ENCODE measurements at regions of chr18 and their contacts with region 1.

Region 1: GRCh38 chr18:36296650-36297416 is 680 bp upstream of the FHOD3 start:
- DNase-seq: peak; percentile 77
- ATAC-seq: peak; percentile 67
- H3K4me3 ChIP-seq: peak overlapping the region; percentile 98
- H3K27ac ChIP-seq: peak overlapping the region; percentile 63
- H3K4me1 ChIP-seq: peaks cover 4% of the 10 kb centered on the region
- H3K27me3 ChIP-seq: no peaks in the 10 kb centered on the region; the same call in 1 of the 2 replicates
- CTCF ChIP-seq: peak; percentile 71
- POLR2A ChIP-seq: peak; percentile 54; the same call in 1 of the 2 replicates
- RAD21 ChIP-seq: peak; percentile 73

Region 2: GRCh38 chr18:36411745-36412168 is 114.9 kb after region 1 on chr18:
- CTCF ChIA-PET with region 1: no interaction called
- POLR2A ChIA-PET with region 1: no interaction called
- dilution Hi-C with region 1: no loop called
- in situ Hi-C with region 1: no loop called
- intact Hi-C with region 1: loop called (anchors 2 kb)
- DNase-seq: peak; percentile 19
- ATAC-seq: 0 out of 2 replicates have a peak, but pooled peaks have one; percentile 42
- H3K4me3 ChIP-seq: no peak overlapping the region
- H3K27ac ChIP-seq: no peak overlapping the region
- H3K4me1 ChIP-seq: no peaks in the 10 kb centered on the region
- H3K27me3 ChIP-seq: no peaks in the 10 kb centered on the region
- CTCF ChIP-seq: peak; percentile 46
- POLR2A ChIP-seq: no peak
- RAD21 ChIP-seq: peak; percentile 46

Region 3: DNA sequence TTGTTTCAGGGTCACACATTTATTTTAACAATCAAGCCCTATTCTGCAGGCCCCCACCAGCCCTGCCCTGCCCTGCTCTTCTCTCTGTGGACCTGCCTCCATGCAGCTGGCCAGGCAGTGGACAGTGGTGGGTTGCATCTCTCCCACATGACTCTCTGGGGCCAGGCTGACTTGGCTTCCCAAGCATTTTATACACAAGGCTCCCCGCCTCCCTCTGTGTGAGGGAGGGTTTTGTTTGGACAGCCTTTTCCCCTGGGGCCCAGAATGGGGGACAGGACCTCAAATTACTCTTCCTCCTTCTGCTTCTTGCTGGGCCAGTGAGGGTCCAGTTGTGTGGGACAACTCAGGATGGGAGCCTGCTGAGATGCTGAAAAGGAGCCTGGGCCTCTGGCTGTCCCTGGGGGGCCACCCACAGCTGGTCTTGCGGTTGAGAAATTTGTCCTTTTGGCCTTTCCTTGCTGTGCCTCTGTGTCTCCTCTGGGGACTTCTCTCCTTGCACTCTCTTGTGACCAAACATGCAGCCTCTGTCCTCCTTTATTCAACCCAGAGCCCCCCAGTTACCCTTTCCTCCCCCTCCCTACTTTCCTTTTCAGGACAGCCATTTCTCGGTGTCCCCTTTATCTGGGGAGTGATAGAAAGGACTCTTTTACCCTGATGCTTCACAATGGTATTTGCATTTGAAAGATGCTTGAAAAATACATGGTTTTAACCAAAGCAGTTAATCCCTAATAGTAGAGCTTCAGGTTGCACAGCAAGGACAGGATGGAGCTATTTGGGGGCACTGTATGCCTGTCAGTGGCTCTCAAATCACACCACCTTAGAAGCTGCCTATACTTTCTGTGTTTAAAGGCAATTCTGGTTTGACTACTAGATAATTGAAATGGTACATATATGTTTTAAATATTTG is 151.8 kb after region 1 on chr18:
- CTCF ChIA-PET with region 1: no interaction called
- POLR2A ChIA-PET with region 1: no interaction called
- dilution Hi-C with region 1: no loop called
- in situ Hi-C with region 1: no loop called
- intact Hi-C with region 1: loop called (anchors 1 kb)
- DNase-seq: no peak
- ATAC-seq: peak; percentile 54
- H3K4me3 ChIP-seq: no peak overlapping the region
- H3K27ac ChIP-seq: no peak overlapping the region
- H3K4me1 ChIP-seq: peaks cover 14% of the 10 kb centered on the region
- H3K27me3 ChIP-seq: no peaks in the 10 kb centered on the region
- CTCF ChIP-seq: no peak
- POLR2A ChIP-seq: no peak
- RAD21 ChIP-seq: no peak

Region 4: GRCh38 chr18:36558234-36558633 is 261.4 kb after region 1 on chr18:
- CTCF ChIA-PET with region 1: no interaction called
- POLR2A ChIA-PET with region 1: no interaction called
- dilution Hi-C with region 1: no loop called
- in situ Hi-C with region 1: no loop called
- intact Hi-C with region 1: loop called (anchors 5 kb)
- DNase-seq: peak; percentile 44
- ATAC-seq: peak; percentile 76
- H3K4me3 ChIP-seq: no peak overlapping the region
- H3K27ac ChIP-seq: peak overlapping the region; percentile 50; the same call in 1 of the 2 replicates
- H3K4me1 ChIP-seq: peaks cover 10% of the 10 kb centered on the region
- H3K27me3 ChIP-seq: no peaks in the 10 kb centered on the region
- CTCF ChIP-seq: 0 out of 2 replicates have a peak, but pooled peaks have one; percentile 13
- POLR2A ChIP-seq: no peak
- RAD21 ChIP-seq: no peak

Region 5: GRCh38 chr18:36572135-36572856 is 275.5 kb after region 1 on chr18:
- CTCF ChIA-PET with region 1: no interaction called
- POLR2A ChIA-PET with region 1: no interaction called
- dilution Hi-C with region 1: no loop called
- in situ Hi-C with region 1: no loop called
- intact Hi-C with region 1: loop called (anchors 1 kb)
- DNase-seq: peak; percentile 49
- ATAC-seq: peak; percentile 73
- H3K4me3 ChIP-seq: no peak overlapping the region
- H3K27ac ChIP-seq: no peak overlapping the region
- H3K4me1 ChIP-seq: peaks cover 2% of the 10 kb centered on the region; the same call in 1 of the 2 replicates
- H3K27me3 ChIP-seq: no peaks in the 10 kb centered on the region
- CTCF ChIP-seq: peak; percentile 53
- POLR2A ChIP-seq: no peak
- RAD21 ChIP-seq: peak; percentile 58

Region 6: DNA sequence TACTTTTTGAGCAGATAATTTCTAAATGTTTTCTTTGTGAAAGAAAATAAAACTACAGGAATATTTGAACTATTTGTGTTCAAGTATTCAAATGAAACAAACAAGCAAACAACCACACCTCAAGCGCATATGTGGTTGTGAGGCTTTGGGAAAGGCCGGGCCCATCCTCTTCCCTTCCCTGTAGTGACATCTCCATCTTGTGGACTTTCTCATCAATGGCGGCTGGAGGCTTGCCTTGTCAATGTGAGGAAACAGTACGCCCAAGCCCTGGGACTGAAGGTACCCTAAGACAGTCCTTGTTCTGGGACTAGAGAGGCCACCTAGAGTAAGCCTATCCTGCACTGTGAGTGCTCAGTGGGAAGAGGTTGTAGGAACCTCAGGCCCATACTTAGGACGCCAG is 365.2 kb after region 1 on chr18:
- CTCF ChIA-PET with region 1: no interaction called
- POLR2A ChIA-PET with region 1: no interaction called
- dilution Hi-C with region 1: no loop called
- in situ Hi-C with region 1: no loop called
- intact Hi-C with region 1: loop called (anchors 2 kb)
- DNase-seq: peak; percentile 28
- ATAC-seq: peak; percentile 73
- H3K4me3 ChIP-seq: no peak overlapping the region
- H3K27ac ChIP-seq: no peak overlapping the region
- H3K4me1 ChIP-seq: peaks cover 6% of the 10 kb centered on the region
- H3K27me3 ChIP-seq: no peaks in the 10 kb centered on the region
- CTCF ChIP-seq: peak; percentile 48
- POLR2A ChIP-seq: no peak
- RAD21 ChIP-seq: peak; percentile 67

Region 7: GRCh38 chr18:36809590-36810381 is 513.0 kb after region 1 on chr18:
- CTCF ChIA-PET with region 1: no interaction called
- POLR2A ChIA-PET with region 1: no interaction called
- dilution Hi-C with region 1: no loop called
- in situ Hi-C with region 1: no loop called
- intact Hi-C with region 1: loop called (anchors 5 kb)
- DNase-seq: peak; percentile 79
- ATAC-seq: peak; percentile 70
- H3K4me3 ChIP-seq: no peak overlapping the region
- H3K27ac ChIP-seq: no peak overlapping the region
- H3K4me1 ChIP-seq: peaks cover 17% of the 10 kb centered on the region
- H3K27me3 ChIP-seq: no peaks in the 10 kb centered on the region
- CTCF ChIP-seq: peak; percentile 75
- POLR2A ChIP-seq: no peak
- RAD21 ChIP-seq: peak; percentile 73

Measured in IMR-90 (cell line).